ENCODE measurements at regions of chr2 and their contacts with region 1.

Region 1: GRCh38 chr2:214232266-214232665 is 178.6 kb upstream of the VWC2L start:
- DNase-seq: no peak
- H3K4me3 ChIP-seq: no peak overlapping the region
- H3K27ac ChIP-seq: no peak overlapping the region
- H3K4me1 ChIP-seq: no peaks in the 10 kb centered on the region
- H3K27me3 ChIP-seq: no peaks in the 10 kb centered on the region
- CTCF ChIP-seq: no peak

Region 2: DNA sequence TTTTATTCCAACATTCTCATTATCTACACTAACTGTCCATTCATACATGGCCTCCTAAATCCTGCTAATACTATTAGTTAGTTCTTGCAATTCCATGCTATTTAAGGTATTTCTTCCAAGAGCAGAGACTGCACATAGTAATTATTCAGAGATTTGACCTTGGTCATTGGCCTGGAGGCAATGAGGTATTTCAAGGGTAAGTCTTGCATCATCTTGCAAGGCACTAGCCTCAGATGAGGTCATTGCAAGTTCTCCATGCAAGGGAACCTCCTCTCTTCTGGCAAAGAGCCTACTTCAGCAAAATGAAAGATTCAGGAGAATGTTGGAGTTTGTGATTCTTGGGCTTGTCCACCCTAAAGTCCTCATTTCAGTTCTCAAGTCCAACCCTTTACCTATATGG is 1032.4 kb before region 1 on chr2:
- intact Hi-C with region 1: loop called (anchors 10 kb)
- DNase-seq: no peak
- H3K4me3 ChIP-seq: no peak overlapping the region
- H3K27ac ChIP-seq: no peak overlapping the region
- H3K4me1 ChIP-seq: no peaks in the 10 kb centered on the region
- H3K27me3 ChIP-seq: no peaks in the 10 kb centered on the region
- CTCF ChIP-seq: no peak

Region 3: GRCh38 chr2:214215107-214215506 is 17.2 kb before region 1 on chr2:
- intact Hi-C with region 1: no loop called
- DNase-seq: no peak
- H3K4me3 ChIP-seq: no peak overlapping the region
- H3K27ac ChIP-seq: no peak overlapping the region
- H3K4me1 ChIP-seq: no peaks in the 10 kb centered on the region
- H3K27me3 ChIP-seq: no peaks in the 10 kb centered on the region
- CTCF ChIP-seq: no peak